Prostate gland (tissue), 2 donors: ENCODE measurements at regions of chr4 and their contacts with region 1.

Region 1: GRCh38 chr4:99723612-99724011 is 66.0 kb upstream of the C4orf54 start:
- DNase-seq: peak; percentile 49
- H3K4me3 ChIP-seq: no peak overlapping the region
- H3K27ac ChIP-seq: peak overlapping the region in 1 of 2 donors; percentile 23
- H3K4me1 ChIP-seq: no peaks in the 10 kb centered on the region
- H3K27me3 ChIP-seq: no peaks in the 10 kb centered on the region
- CTCF ChIP-seq: no peak
- POLR2A ChIP-seq: no peak

Region 2: GRCh38 chr4:99563310-99564186 is 160.1 kb before region 1 on chr4 and contains the start of gene TRMT10A:
- intact Hi-C with region 1: loop called (anchors 2 kb)
- DNase-seq: peak; percentile 97
- H3K4me3 ChIP-seq: peak within 1 kb of the TSS; percentile 53 to 68
- H3K27ac ChIP-seq: peak within 1 kb of the TSS; percentile 94 to 95
- H3K4me1 ChIP-seq: no peaks in the 10 kb centered on the region
- H3K27me3 ChIP-seq: no peaks in the 10 kb centered on the region
- CTCF ChIP-seq: peak in 2 of 4 experiments; percentile 29 to 34
- POLR2A ChIP-seq: peak; percentile 37
- total RNA-seq, gene TRMT10A: 7.2 to 8.0 TPM

Region 3: DNA sequence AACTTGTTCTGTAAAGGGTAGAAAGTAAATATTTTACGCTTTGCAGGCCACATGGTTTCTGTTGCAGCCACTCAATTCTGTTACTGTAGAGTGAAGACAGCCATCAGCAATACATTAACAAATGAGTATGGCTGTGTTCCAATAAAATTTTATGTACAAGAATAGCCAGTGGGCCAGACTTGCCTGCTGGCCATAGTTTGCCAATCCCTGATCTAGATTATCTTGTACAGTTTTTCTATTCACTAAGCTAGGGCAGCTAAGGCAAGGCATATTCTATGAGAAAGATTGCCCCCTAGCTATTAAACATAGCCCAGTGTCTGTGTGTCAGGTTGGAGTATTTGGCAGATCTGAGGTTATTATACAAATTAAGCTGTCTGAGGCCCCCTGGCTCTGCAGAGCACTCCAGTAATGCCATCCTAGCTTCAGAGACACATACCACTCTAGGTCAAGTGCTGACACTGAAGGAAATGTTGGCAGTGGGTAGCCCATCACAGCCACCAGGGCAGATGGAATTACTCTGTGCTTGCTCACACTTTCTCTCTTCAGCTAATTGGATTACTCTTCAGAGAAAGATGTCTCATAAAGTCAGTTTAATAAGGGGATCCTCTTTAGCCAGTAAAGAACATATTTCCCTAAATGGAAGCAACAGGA is 108.3 kb before region 1 on chr4:
- intact Hi-C with region 1: no loop called
- DNase-seq: no peak
- H3K4me3 ChIP-seq: no peak overlapping the region
- H3K27ac ChIP-seq: no peak overlapping the region
- H3K4me1 ChIP-seq: no peaks in the 10 kb centered on the region
- H3K27me3 ChIP-seq: no peaks in the 10 kb centered on the region
- CTCF ChIP-seq: no peak
- POLR2A ChIP-seq: no peak

Region 4: DNA sequence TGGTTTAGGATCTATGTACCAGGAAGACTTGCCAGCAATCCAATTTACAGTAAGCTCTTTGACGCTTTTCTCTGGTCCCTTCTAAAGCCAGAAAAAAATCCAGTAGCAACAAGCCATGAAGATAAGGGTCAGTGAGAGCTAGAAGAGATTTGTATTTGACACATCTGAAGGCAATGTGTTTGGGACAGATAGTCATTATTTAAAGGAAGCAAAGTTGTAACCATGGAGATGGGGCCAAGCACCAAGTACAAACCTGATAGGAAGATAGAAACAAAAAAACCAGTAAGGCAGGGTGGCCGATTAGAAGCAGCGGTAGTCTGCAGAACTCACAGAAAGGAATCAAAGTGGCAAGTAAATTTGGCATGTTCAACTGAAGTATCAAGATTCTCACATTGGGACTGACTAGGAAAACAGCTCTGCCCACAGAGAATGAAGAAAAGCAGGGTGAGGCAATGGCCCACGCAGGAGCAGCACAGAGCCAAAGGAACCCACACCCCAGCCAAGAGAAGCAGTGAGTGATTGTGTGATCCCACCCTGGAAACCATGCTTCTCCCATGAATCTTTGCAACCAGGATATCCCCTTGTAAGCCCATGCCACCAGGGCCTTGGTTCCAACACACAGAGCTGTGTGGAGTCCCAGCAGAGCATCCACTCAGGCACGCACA is 53.1 kb before region 1 on chr4:
- intact Hi-C with region 1: loop called (anchors 5 kb)
- DNase-seq: no peak
- H3K4me3 ChIP-seq: no peak overlapping the region
- H3K27ac ChIP-seq: no peak overlapping the region
- H3K4me1 ChIP-seq: no peaks in the 10 kb centered on the region
- H3K27me3 ChIP-seq: no peaks in the 10 kb centered on the region
- CTCF ChIP-seq: no peak
- POLR2A ChIP-seq: no peak

Region 5: DNA sequence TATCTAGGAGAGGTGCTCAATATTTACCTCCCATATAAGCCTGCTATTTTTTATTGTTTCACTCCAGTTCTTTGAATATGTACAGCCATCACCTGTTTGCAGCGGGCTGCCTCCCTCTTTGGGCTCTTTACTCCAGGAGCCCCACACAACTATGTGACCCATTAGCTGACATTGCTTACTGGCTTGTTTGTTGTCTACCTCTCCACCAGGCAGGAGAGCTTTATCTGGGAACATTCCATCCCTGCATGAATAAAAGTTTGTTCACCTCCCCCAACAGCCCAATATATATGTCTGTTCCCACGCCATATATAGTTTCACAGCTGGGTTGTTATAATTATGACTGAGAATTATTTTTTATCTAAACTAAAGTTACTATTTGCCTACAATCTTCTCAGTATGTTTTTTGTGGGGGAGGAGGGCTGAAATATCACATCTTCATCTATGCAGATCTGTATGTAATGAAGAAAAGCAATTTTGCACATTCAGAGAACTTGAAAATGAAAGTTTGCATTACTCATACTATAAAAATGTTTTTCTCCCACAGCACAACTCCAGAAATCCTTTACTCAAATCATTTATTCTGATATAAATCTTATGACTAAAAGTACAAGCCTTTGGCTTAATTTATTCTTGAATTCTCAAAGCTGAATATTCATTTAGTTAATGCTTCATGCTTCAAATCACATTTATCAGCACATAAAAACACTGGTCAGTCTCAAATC is 31.8 kb after region 1 on chr4:
- intact Hi-C with region 1: loop called (anchors 5 kb)
- DNase-seq: no peak
- H3K4me3 ChIP-seq: no peak overlapping the region
- H3K27ac ChIP-seq: no peak overlapping the region
- H3K4me1 ChIP-seq: no peaks in the 10 kb centered on the region
- H3K27me3 ChIP-seq: no peaks in the 10 kb centered on the region
- CTCF ChIP-seq: no peak
- POLR2A ChIP-seq: no peak

Region 6: DNA sequence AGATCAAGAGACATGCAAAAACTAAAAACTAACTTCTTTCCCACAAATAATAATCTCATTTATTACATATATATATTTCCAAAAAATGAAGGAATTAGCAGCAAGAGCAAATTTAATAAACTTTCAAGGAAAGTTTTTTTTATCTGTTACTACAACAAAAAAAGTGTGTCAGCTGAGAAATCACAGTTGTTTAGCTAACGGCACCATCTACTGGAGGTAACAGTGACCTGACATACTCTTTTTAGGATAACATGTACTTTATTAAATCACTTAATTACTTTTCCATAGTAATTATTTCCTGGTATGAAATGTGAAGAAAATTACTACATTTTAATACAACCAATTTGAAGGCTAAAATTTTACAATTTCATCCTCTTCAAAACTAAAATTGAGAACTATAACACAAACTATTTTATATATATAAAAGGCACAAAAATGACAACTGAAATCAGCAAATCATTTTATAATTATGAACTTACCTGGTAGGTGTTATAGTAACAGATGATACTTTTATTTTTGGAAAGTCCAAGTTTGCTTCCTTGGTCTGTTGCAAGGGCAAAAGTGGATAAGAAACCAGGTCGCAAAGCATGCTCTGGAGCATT is 161.6 kb after region 1 on chr4:
- intact Hi-C with region 1: loop called (anchors 5 kb)
- DNase-seq: no peak
- H3K4me3 ChIP-seq: no peak overlapping the region
- H3K27ac ChIP-seq: no peak overlapping the region
- H3K4me1 ChIP-seq: no peaks in the 10 kb centered on the region
- H3K27me3 ChIP-seq: peaks cover 2% of the 10 kb centered on the region
- CTCF ChIP-seq: peak in 3 of 4 experiments; percentile 33 to 73 (median 60)
- POLR2A ChIP-seq: no peak

Region 7: DNA sequence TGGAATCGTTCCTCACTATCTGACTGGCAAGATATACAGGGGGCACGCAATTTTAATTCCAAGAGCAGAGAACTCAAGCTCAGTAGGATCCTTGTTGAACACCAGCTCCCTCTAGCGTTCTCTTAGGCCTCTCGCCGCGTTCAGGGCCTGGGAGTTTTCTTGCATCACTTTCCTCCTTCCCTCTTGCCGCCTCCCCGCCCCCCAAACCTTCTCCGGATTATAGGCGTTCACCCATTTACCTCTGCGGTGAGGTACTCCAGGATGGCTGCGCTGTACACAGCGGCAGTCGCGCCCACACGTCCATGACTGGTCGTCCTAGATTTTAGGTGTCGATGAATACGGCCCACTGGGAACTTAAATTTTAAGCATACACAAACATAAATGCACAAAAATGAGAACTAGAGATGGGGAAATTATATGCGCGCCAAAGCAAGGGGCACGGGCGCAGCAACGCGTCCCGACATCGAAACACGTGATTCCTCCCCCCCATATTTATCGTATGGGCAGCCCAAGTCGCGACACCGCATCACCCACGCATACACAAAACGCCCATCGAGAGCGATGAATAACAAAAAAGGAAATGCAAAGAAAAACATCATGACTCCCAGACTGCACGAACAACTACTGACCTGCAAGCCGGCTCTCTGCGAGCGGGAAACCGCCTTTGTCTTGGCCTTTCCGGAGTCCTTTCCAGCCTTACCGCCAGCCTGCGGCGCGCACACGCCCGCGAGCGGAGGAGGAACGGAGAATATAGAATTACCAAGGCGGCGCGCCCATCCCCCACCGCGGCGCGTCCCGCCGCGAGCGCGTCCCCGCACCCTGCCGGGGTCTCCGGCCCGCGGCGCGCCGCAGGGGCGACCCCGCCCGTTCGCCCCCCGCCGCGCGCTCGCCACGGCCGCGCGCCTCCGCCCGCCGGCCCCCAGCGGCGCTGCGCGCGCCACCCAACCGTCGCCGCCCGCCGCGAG is 225.7 kb after region 1 on chr4:
- intact Hi-C with region 1: loop called (anchors 5 kb)
- DNase-seq: peak; percentile 93
- H3K4me3 ChIP-seq: peak overlapping the region; percentile 72 to 82
- H3K27ac ChIP-seq: peak overlapping the region; percentile 94 to 97
- H3K4me1 ChIP-seq: peaks cover 6% of the 10 kb centered on the region
- H3K27me3 ChIP-seq: no peaks in the 10 kb centered on the region
- CTCF ChIP-seq: peak in 3 of 4 experiments; percentile 81 to 88 (median 88)
- POLR2A ChIP-seq: peak; percentile 43